WTC11 (cell line): ENCODE measurements at regions of chr11 and their contacts with region 1.

Region 1: GRCh38 chr11:19658344-19658743 is 54.3 kb upstream of the NAV2 start:
- DNase-seq: no peak
- ATAC-seq: no peak
- H3K4me3 Mint-ChIP-seq: no peak overlapping the region
- H3K27ac Mint-ChIP-seq: no peak overlapping the region
- H3K4me1 Mint-ChIP-seq: no peaks in the 10 kb centered on the region
- H3K27me3 Mint-ChIP-seq: no peaks in the 10 kb centered on the region; the same call in 1 of the 2 replicates
- CTCF ChIP-seq: no peak

Region 2: DNA sequence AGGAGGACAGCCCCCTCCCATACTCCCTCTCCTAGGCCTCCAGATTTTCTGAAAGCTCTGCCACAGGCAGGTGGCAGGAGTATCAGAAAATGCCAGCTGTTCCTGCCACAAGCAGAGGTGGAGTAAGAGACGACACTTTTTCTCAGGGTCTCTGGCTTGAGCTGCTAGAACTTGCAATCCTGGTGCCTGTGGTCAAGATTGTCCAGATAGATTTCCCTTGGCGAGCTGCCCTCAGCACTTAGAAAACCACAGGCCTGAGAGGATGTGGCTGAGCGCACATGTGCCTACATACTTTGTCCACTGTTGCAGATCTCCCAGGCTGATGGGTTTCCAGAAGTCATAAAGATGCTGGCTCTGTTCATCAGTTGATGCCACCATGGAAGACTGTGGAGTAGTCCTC is 11.4 kb before region 1 on chr11:
- CTCF ChIA-PET with region 1: interaction called, 15 read pairs
- POLR2A ChIA-PET with region 1: no interaction called
- DNase-seq: no peak
- ATAC-seq: no peak
- H3K4me3 Mint-ChIP-seq: no peak overlapping the region
- H3K27ac Mint-ChIP-seq: no peak overlapping the region
- H3K4me1 Mint-ChIP-seq: no peaks in the 10 kb centered on the region
- H3K27me3 Mint-ChIP-seq: no peaks in the 10 kb centered on the region
- CTCF ChIP-seq: no peak

Region 3: DNA sequence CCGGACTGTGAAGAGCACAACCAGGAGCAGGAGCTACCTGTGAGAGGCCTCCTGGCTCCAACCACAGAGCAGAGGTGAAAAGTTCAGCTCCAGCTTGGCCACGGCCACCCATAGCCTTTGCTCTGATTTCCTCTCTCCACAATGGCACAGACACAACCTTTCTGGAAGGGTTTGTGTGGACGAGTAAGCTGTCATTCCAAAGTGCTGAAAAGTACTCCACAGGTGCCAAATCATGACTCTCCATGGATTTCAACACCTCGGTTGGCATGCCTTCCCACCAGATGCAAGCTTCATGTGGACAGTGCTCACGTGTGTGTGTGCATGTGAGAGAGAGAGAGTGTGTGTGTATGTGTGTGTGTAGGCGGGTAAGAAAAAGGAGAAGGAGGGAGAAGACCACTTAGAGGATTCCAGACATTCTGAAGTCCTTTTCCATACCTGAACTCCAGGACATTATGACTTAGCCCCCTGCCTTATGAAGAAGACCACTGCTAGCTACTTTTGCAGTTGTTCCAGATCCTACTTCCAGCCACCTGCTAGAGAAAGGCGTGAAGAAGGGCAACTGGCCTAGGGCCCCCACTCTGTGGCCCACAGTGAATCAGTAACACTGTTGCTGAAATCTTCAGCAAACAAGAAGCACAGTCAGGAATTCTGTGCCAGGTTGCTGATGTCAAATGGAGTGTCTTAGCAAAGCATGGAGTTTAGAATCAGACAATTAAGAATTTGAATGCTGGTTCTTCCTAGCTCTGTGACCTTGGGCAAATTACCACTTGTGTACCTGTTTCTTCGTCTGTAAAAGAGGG is 40.3 kb after region 1 on chr11:
- CTCF ChIA-PET with region 1: no interaction called
- POLR2A ChIA-PET with region 1: no interaction called
- DNase-seq: no peak
- ATAC-seq: no peak
- H3K4me3 Mint-ChIP-seq: no peak overlapping the region
- H3K27ac Mint-ChIP-seq: no peak overlapping the region
- H3K4me1 Mint-ChIP-seq: peaks cover 25% of the 10 kb centered on the region
- H3K27me3 Mint-ChIP-seq: peaks cover 8% of the 10 kb centered on the region
- CTCF ChIP-seq: no peak